ENCODE measurements at regions of chr16 and their contacts with region 1.

Region 1: DNA sequence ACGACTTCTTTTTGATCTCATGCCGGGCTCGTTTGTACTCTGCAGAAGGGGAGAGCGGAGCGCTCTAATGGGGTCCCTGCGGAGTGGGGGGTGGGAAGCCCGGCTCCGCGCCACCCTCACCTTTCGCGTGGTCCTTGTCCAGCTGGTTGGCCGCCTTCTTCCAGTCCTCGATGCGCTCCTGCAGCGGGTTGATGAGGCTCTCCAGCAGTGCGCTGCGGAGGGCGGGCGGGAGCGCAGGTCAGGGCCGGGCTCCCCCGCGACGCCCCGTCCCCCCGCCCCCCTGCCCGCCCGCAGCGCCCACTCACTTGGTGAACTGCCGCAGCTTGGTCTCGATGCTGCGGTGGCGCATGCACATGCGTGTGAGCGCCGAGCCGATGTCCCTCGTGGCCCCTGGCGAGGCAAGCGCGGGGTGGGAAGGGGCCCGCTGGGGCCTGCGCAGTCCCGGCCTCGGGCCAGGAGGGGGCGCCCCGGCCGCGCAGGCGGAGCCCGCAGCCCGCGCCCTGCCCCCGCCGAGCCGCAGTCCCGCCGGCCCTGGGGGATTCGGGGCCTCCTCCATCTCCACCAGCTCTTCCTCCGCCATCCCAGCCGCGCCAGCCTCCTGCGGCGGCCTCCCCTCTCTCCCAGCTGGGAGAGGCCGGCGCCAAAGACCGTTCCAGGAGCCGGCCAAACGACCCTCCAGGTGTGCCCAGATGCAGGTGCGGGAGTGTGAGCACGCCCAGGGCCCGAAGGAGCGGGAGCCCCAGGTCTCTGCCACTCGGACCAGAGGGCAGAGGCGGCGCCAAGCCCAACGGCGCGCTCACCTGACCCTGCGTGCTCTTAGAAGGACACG is 6.0 kb downstream of the MTSS2 start:
- DNase-seq: no peak
- H3K4me3 ChIP-seq: no peak overlapping the region
- CTCF ChIP-seq: peak; percentile 32

Region 2: DNA sequence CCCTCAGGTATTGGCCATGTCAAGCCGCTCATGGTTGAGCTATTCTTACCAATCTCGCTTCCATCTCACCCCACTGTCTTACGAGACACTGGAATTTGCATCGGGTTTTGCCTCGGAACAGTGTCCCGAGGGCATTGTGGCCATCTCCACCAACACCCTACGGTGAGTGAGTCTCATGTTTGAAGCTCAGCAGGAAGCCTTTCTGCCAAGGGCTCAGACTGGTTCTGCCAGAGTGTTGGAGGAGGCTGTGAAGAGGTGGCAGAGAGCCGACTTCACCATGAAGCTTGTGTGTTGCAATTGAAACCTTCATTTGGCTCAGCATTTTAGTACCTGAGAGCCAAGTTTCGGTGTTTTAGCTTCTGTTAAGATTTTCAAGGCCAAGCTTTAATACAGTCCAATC is 118.3 kb before region 1 on chr16:
- in situ Hi-C with region 1: loop called (anchors 10 kb)
- DNase-seq: no peak
- H3K4me3 ChIP-seq: no peak overlapping the region
- CTCF ChIP-seq: no peak

Region 3: DNA sequence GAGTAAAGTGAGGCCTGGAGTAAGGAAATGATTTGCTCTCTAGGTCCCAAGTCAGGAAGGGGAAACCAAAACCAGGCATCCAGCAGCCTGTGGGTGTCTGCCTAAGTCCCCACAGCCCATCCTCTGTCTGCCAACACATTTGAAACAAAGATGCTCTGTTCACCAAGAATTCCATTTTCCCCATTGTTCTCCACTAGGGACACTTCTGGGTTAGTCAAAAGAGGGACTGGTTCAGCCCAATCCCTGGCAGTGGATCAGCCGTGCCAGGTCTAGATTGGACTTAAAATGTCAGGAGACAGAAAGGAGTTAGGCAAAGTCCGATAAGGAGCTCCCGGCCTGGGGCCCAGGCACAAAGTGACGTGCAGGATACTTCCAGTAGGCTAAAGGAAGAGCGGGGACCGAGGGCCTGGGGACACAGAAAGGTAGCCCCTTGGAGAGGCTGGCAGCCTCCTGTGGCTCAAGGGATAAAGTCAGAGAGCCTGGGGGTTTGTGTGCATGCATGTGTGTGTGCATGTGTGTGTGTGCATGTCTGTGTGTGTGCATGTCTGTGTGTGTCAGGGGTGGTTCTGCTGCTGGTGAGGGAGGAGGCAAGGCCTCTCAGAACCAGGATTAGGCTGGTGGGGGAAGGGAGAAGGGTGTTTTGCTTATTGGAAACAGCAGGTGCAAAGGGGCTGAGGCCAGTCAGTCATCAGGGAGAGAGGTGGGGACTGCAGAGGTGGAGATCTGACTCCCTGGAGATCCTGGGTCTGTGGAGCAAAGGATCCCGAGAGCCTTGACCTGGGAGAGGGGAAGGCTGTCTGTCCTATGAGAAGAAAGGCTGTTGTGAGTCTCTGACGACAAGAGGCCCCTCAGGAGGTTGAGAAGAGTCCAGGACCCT is 75.2 kb before region 1 on chr16:
- in situ Hi-C with region 1: no loop called
- DNase-seq: no peak
- H3K4me3 ChIP-seq: no peak overlapping the region
- CTCF ChIP-seq: no peak

Region 4: GRCh38 chr16:70770626-70771552 is 91.0 kb after region 1 on chr16:
- in situ Hi-C with region 1: loop called (anchors 10 kb)
- DNase-seq: no peak
- H3K4me3 ChIP-seq: no peak overlapping the region
- CTCF ChIP-seq: peak; percentile 95